Activated CD4-positive, alpha-beta T cell treated with anti-CD3 and anti-CD28 coated beads for 36 hours (primary cell): ENCODE measurements at regions of chr14 and their contacts with region 1.

Region 1: GRCh38 chr14:97713023-97713422 is 915.8 kb downstream of the VRK1 start:
- DNase-seq: peak; percentile 63
- ATAC-seq: peak; percentile 94
- H3K4me3 Mint-ChIP-seq: no peak overlapping the region
- H3K27ac Mint-ChIP-seq: peak overlapping the region; percentile 67
- H3K4me1 Mint-ChIP-seq: peaks cover 60% of the 10 kb centered on the region
- H3K27me3 Mint-ChIP-seq: no peaks in the 10 kb centered on the region

Region 2: GRCh38 chr14:97077253-97077653 is 635.8 kb before region 1 on chr14:
- CTCF ChIA-PET with region 1: no interaction called
- POLR2A ChIA-PET with region 1: no interaction called
- intact Hi-C with region 1: no loop called
- DNase-seq: peak; percentile 24
- ATAC-seq: peak; percentile 55
- H3K4me3 Mint-ChIP-seq: no peak overlapping the region
- H3K27ac Mint-ChIP-seq: no peak overlapping the region
- H3K4me1 Mint-ChIP-seq: peaks cover 9% of the 10 kb centered on the region
- H3K27me3 Mint-ChIP-seq: peaks cover 11% of the 10 kb centered on the region

Region 3: GRCh38 chr14:97724265-97724731 is 11.3 kb after region 1 on chr14:
- CTCF ChIA-PET with region 1: interaction called, 12 read pairs
- POLR2A ChIA-PET with region 1: interaction called, 3 read pairs
- intact Hi-C with region 1: no loop called
- DNase-seq: peak; percentile 63
- ATAC-seq: peak; percentile 93
- H3K4me3 Mint-ChIP-seq: peak overlapping the region; percentile 72
- H3K27ac Mint-ChIP-seq: peak overlapping the region; percentile 98
- H3K4me1 Mint-ChIP-seq: peaks cover 76% of the 10 kb centered on the region
- H3K27me3 Mint-ChIP-seq: no peaks in the 10 kb centered on the region

Region 4: DNA sequence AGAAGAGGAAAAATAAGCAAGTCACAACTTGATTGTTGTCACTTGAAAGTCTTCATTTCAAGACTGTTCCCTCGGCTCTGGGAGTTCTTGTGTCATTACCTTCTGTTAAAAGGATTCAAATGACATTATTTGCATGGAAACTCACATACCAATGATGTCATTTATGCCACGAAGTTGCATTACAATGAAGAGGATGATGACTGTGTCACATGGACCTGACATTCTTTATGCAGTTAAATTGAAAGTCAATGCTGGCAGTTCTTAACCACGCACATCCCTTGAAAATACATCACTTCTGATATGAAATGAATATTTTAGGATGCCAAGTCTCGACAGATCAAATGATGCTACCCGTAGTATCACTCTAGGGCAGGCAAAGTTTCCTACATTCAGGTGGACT is 153.6 kb after region 1 on chr14:
- CTCF ChIA-PET with region 1: no interaction called
- POLR2A ChIA-PET with region 1: no interaction called
- intact Hi-C with region 1: loop called in 1 of 2 experiments (anchors 1 kb)
- DNase-seq: no peak
- ATAC-seq: peak; percentile 86
- H3K4me3 Mint-ChIP-seq: no peak overlapping the region
- H3K27ac Mint-ChIP-seq: no peak overlapping the region
- H3K4me1 Mint-ChIP-seq: peaks cover 19% of the 10 kb centered on the region
- H3K27me3 Mint-ChIP-seq: no peaks in the 10 kb centered on the region

Region 5: GRCh38 chr14:98259881-98260280 is 546.9 kb after region 1 on chr14:
- CTCF ChIA-PET with region 1: no interaction called
- POLR2A ChIA-PET with region 1: no interaction called
- intact Hi-C with region 1: no loop called
- DNase-seq: no peak
- ATAC-seq: no peak
- H3K4me3 Mint-ChIP-seq: no peak overlapping the region
- H3K27ac Mint-ChIP-seq: no peak overlapping the region
- H3K4me1 Mint-ChIP-seq: peaks cover 1% of the 10 kb centered on the region
- H3K27me3 Mint-ChIP-seq: no peaks in the 10 kb centered on the region